ENCODE measurements at regions of chr10 and their contacts with region 1.

Region 1: DNA sequence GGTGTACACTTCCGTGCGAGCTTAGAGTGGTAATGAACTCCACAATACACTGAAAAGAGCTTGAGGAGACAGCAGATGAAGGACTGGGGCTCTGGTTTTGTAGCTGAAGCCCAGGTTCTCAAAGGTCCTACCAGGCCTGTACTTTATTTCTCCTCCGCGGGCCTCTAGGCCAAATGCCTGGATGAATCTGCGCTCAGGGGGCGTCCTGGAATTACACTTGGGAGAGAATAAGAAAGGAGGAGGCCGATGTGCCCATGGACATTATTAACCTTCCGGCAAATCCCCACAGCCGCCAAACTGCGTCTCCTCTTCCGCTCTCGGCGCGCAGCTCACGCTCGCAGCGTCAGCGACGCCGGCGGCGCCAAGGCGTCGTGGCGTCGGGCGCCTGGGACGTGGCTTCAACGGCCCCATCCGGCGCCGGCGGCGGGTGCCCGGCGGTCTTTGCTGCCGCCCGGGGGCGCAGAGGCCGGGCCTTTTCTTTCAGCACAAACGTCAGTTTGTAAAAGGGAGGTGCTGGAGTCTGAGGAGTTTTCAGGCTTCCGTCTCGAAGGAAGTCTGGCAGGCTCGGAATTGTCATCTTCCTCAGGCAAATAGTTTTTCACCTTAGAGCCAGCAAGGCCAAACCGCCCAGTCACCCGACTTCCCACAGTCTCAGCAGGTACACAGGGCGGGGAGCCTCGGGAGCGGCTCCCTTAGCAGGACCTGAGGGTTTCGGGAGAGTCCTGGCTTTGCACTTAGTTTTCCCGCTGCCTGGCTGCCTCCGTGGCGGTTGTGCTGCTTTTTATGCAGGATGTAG is at the start of gene CCDC7:
- DNase-seq: peak; percentile 70 to 84
- H3K4me3 ChIP-seq: peak within 1 kb of the TSS; percentile 91
- H3K27ac ChIP-seq: peak within 1 kb of the TSS; percentile 78
- H3K4me1 ChIP-seq: peaks cover 7% of the 10 kb centered on the region; the same call in 1 of the 2 replicates
- H3K27me3 ChIP-seq: no peaks in the 10 kb centered on the region
- CTCF ChIP-seq: peak; percentile 30; the same call in 1 of the 2 replicates
- total RNA-seq, gene CCDC7: 5.2 and 6.9 TPM in 2 replicates

Region 2: GRCh38 chr10:32298054-32298812 is 147.7 kb before region 1 on chr10:
- CTCF ChIA-PET with region 1: no interaction called
- POLR2A ChIA-PET with region 1: no interaction called
- intact Hi-C with region 1: loop called (anchors 1 kb)
- DNase-seq: peak in 1 of 2 experiments; percentile 89
- H3K4me3 ChIP-seq: peak overlapping the region; percentile 24; the same call in 1 of the 2 replicates
- H3K27ac ChIP-seq: peak overlapping the region; percentile 82
- H3K4me1 ChIP-seq: peaks cover 11% of the 10 kb centered on the region
- H3K27me3 ChIP-seq: no peaks in the 10 kb centered on the region
- CTCF ChIP-seq: no peak

Region 3: GRCh38 chr10:32378363-32379317 is 67.3 kb before region 1 on chr10:
- CTCF ChIA-PET with region 1: interaction called, 3 read pairs
- POLR2A ChIA-PET with region 1: interaction called, 12 read pairs
- intact Hi-C with region 1: loop called (anchors 1 kb)
- DNase-seq: peak; percentile 68 to 84
- H3K4me3 ChIP-seq: peak overlapping the region; percentile 88
- H3K27ac ChIP-seq: peak overlapping the region; percentile 79
- H3K4me1 ChIP-seq: peaks cover 17% of the 10 kb centered on the region
- H3K27me3 ChIP-seq: no peaks in the 10 kb centered on the region
- CTCF ChIP-seq: no peak

Region 4: DNA sequence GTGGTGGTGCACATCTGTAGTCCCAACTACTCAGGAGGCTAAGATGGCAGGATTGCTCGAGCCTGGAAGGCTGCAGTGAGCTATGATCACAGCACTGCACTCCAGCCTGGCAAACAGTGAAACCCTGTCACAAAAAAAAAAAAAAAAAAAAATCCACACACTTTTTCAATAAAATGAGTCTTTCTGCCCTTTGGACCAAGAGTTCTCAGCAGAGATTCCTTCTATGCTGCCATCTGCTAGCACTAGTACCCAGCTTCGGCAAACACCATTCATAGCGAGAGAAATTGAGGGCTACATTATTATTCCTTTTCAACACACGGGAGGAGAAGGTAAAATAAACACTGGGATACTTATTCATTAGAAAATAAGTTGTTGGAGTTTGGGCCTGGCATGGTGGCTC is 43.4 kb before region 1 on chr10:
- CTCF ChIA-PET with region 1: no interaction called
- POLR2A ChIA-PET with region 1: interaction called, 12 read pairs
- intact Hi-C with region 1: no loop called
- DNase-seq: no peak
- H3K4me3 ChIP-seq: no peak overlapping the region
- H3K27ac ChIP-seq: no peak overlapping the region
- H3K4me1 ChIP-seq: no peaks in the 10 kb centered on the region
- H3K27me3 ChIP-seq: no peaks in the 10 kb centered on the region
- CTCF ChIP-seq: no peak

Region 5: DNA sequence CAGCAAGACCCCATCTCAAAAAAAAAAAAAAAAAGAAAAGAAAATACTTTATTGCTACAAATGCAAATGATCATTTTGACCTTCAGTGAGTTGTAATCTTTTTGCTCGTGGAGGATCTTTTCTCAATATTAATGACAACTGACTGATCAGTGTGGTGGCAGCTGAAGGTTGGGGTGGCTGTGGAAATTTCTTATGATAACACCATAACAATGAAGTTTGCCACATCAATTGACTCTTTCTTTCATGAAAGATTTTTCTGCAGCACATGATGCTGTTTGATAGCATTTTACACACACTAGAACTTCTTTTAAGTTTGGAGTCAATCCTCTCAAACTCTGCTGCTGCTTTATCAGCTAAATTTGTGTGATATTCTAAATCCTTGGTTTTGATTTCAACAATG is 12.4 kb before region 1 on chr10:
- CTCF ChIA-PET with region 1: no interaction called
- POLR2A ChIA-PET with region 1: no interaction called
- intact Hi-C with region 1: no loop called
- DNase-seq: no peak
- H3K4me3 ChIP-seq: no peak overlapping the region
- H3K27ac ChIP-seq: no peak overlapping the region
- H3K4me1 ChIP-seq: no peaks in the 10 kb centered on the region
- H3K27me3 ChIP-seq: no peaks in the 10 kb centered on the region
- CTCF ChIP-seq: no peak

Measured in PC-9 (cell line).